ENCODE measurements at regions of chr3 and their contacts with region 1.

Region 1: DNA sequence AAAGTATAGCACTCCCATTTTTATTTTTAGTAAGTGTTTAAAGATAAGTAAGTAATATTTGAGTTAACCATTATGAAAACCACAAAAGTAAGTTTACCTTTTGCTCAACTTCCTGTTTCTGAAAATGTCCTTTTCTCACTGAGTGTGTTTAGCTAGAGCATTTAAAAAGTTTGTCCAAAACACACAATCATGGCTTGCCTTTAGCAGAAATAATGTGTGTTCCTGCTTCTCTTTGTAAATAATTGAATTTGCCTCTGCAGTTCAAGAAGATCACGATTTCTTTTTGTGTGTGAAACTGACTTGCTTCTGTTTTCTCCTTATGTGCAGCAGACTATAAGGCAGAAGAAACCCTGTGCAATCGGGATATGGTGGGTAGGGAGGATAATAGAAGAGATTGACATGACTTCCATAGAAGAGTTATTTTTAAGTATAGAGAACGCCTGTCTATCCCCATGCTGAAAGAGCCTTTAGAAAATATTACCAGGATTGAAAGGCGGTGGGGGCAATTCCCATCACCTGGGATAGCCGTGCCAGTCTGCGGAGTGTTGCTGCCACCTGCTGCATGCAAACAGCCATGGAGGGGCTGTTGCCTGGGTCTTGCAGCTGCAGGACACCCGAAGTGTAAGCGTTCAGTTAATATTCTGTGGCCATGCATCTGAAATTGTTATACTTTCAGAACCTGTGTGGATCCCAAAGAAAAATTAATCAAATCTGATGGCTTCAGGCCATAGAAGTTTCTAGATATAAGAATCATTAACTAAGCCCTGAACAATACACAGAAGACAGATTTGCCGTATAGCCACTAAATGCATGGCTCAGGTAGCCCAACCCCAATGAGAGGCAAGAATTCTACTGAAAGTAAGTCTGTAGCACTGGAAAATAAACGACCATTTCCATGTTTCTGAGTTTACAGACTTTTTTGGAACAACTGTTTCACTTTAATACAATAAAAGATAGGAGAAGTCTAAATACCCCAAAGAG is 2.4 kb upstream of the CD96 start:
- DNase-seq: peak; percentile 79
- ATAC-seq: peak; percentile 99
- H3K4me3 Mint-ChIP-seq: no peak overlapping the region
- H3K27ac Mint-ChIP-seq: no peak overlapping the region
- H3K4me1 Mint-ChIP-seq: peaks cover 4% of the 10 kb centered on the region
- H3K27me3 Mint-ChIP-seq: no peaks in the 10 kb centered on the region
- CTCF ChIP-seq: peak; percentile 59

Region 2: DNA sequence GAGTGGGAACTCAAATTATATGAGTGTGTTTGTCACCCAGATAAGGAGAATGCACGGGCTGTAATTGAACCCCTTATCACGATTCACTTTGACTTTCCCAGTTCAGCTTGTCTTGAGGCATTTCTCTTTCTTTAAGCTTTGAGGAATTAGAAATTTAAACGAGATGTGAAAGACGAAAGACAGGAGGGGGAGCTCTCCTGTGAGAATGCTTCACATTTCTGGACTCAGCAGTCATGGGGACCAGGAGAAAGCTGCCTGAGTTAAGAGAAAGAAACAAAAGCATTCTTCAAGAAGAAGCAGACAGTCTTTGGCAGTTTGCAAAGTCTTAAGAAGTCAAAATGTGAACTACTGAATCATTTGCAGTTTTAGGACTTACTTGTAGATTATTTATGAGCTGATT is 262.4 kb before region 1 on chr3:
- CTCF ChIA-PET with region 1: interaction called, 14 read pairs
- POLR2A ChIA-PET with region 1: no interaction called
- DNase-seq: no peak
- ATAC-seq: peak; percentile 87
- H3K4me3 Mint-ChIP-seq: no peak overlapping the region
- H3K27ac Mint-ChIP-seq: no peak overlapping the region
- H3K4me1 Mint-ChIP-seq: peaks cover 17% of the 10 kb centered on the region
- H3K27me3 Mint-ChIP-seq: no peaks in the 10 kb centered on the region
- CTCF ChIP-seq: no peak

Region 3: GRCh38 chr3:111577794-111578685 is 38.4 kb after region 1 on chr3:
- CTCF ChIA-PET with region 1: no interaction called
- POLR2A ChIA-PET with region 1: no interaction called
- DNase-seq: no peak
- ATAC-seq: peak; percentile 95
- H3K4me3 Mint-ChIP-seq: no peak overlapping the region
- H3K27ac Mint-ChIP-seq: no peak overlapping the region
- H3K4me1 Mint-ChIP-seq: no peaks in the 10 kb centered on the region
- H3K27me3 Mint-ChIP-seq: no peaks in the 10 kb centered on the region; the same call in 1 of the 2 replicates
- CTCF ChIP-seq: no peak

Region 4: GRCh38 chr3:111590096-111590531 is 50.5 kb after region 1 on chr3:
- CTCF ChIA-PET with region 1: no interaction called
- POLR2A ChIA-PET with region 1: no interaction called
- DNase-seq: no peak
- ATAC-seq: no peak
- H3K4me3 Mint-ChIP-seq: no peak overlapping the region
- H3K27ac Mint-ChIP-seq: no peak overlapping the region
- H3K4me1 Mint-ChIP-seq: 0 out of 2 replicates have a peak, but pooled peaks cover 5% of the 10 kb centered on the region
- H3K27me3 Mint-ChIP-seq: peaks cover 3% of the 10 kb centered on the region; the same call in 1 of the 2 replicates
- CTCF ChIP-seq: no peak

Region 5: DNA sequence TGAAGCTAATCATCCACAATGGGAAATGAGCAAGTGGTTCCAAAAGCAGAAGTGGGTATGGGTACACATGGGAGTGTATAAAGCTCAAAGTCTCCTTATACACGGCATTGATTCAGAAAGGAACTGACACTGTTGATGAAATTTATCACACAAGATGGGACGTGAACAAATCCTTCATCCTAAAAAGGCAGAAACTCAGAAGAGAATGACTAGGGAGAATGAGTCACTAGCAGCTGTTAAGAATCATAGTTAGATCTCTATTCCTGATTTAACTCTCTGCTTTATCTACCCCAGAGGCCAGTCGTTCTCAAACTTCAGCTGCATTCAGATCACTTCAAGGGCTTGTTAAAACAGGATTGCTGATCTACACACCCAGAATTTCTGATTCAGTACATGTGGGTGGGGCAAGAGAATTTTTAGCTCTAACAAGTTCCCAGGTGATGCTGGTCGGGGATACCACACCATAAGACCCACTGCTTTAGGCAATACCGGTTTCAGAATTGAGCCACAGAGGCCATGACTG is 221.7 kb after region 1 on chr3:
- CTCF ChIA-PET with region 1: no interaction called
- POLR2A ChIA-PET with region 1: no interaction called
- DNase-seq: no peak
- ATAC-seq: no peak
- H3K4me3 Mint-ChIP-seq: no peak overlapping the region
- H3K27ac Mint-ChIP-seq: no peak overlapping the region
- H3K4me1 Mint-ChIP-seq: no peaks in the 10 kb centered on the region
- H3K27me3 Mint-ChIP-seq: no peaks in the 10 kb centered on the region
- CTCF ChIP-seq: no peak